ENCODE measurements at regions of chr13 and their contacts with region 1.

Region 1: DNA sequence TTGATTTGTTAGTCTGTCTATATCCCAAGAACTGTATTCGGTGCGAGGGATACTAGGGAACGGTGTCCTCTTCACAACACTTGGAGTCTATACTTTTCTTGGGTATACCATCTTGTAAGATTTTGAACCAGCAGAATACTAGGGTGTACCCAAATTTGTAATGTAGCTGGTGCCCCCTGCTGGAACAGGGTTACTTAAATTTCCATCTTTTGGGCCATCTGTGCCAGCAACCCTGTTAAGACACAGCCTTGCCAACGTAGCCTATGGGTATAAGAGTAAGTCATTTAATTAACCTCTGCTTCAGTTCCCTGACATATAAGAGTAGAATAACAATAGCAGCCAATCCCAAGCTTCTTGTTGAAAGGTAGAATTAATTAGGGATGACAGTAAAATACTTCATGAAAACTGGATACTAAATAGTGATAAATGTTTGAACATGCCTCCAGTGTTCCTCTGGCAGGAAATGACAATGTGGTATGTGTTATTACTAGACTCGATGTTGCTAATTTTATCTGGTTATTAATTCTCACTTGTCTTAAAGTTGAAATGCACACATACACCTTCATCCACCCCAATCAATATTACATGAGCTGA is 607.6 kb downstream of the FGF9 start:
- DNase-seq: peak; percentile 51 to 60
- H3K4me3 ChIP-seq: no peak overlapping the region
- H3K4me3 Mint-ChIP-seq: no peak overlapping the region
- H3K27ac Mint-ChIP-seq: no peak overlapping the region
- H3K4me1 ChIP-seq: no peaks in the 10 kb centered on the region
- H3K4me1 Mint-ChIP-seq: no peaks in the 10 kb centered on the region
- H3K27me3 ChIP-seq: no peaks in the 10 kb centered on the region
- H3K27me3 Mint-ChIP-seq: no peaks in the 10 kb centered on the region
- CTCF ChIP-seq: peak; percentile 54 to 63

Region 2: DNA sequence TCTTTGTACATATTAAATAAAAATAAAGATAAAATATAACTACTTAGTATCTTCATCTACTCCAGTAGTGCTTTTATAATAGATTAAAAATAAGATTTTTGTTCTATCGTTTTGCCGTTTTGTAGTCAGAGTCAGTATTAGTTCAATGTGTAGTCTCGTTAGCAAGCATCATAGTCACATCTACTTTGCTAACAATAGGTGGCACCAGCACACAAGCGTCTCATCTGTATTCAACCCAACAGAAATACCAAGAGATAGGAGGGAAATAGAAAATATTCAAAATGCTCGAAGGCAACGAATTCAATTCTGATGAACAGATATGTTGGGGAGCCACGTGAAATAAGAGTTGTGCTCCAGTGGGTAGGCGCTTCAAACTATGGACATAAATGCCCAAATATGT is 653.1 kb before region 1 on chr13:
- CTCF ChIA-PET with region 1: no interaction called
- POLR2A ChIA-PET with region 1: no interaction called
- intact Hi-C with region 1: loop called (anchors 1 kb)
- DNase-seq: peak; percentile 49 to 51
- H3K4me3 ChIP-seq: no peak overlapping the region; the same call in 1 of the 2 replicates
- H3K4me3 Mint-ChIP-seq: no peak overlapping the region
- H3K27ac Mint-ChIP-seq: no peak overlapping the region
- H3K4me1 ChIP-seq: peaks cover 10% of the 10 kb centered on the region; the same call in 1 of the 2 replicates
- H3K4me1 Mint-ChIP-seq: peaks cover 10% of the 10 kb centered on the region
- H3K27me3 ChIP-seq: no peaks in the 10 kb centered on the region
- H3K27me3 Mint-ChIP-seq: no peaks in the 10 kb centered on the region
- CTCF ChIP-seq: peak; percentile 67 to 75

Region 3: GRCh38 chr13:21849323-21849722 is 429.1 kb before region 1 on chr13:
- CTCF ChIA-PET with region 1: no interaction called
- POLR2A ChIA-PET with region 1: no interaction called
- intact Hi-C with region 1: loop called (anchors 2 kb)
- DNase-seq: peak in 1 of 2 experiments; percentile 55
- H3K4me3 ChIP-seq: no peak overlapping the region
- H3K4me3 Mint-ChIP-seq: no peak overlapping the region
- H3K27ac Mint-ChIP-seq: no peak overlapping the region
- H3K4me1 ChIP-seq: no peaks in the 10 kb centered on the region
- H3K4me1 Mint-ChIP-seq: no peaks in the 10 kb centered on the region
- H3K27me3 ChIP-seq: no peaks in the 10 kb centered on the region
- H3K27me3 Mint-ChIP-seq: no peaks in the 10 kb centered on the region
- CTCF ChIP-seq: peak; percentile 69 to 74